ENCODE measurements at regions of chr20 and their contacts with region 1.

Region 1: GRCh38 chr20:13771853-13772453 is 12.8 kb downstream of the ESF1 start:
- DNase-seq: no peak
- H3K4me3 ChIP-seq: no peak overlapping the region
- H3K27ac ChIP-seq: no peak overlapping the region
- H3K4me1 ChIP-seq: no peaks in the 10 kb centered on the region
- H3K27me3 ChIP-seq: no peaks in the 10 kb centered on the region
- CTCF ChIP-seq: peak in 3 of 4 experiments; percentile 27 to 55 (median 36)
- POLR2A ChIP-seq: no peak

Region 2: DNA sequence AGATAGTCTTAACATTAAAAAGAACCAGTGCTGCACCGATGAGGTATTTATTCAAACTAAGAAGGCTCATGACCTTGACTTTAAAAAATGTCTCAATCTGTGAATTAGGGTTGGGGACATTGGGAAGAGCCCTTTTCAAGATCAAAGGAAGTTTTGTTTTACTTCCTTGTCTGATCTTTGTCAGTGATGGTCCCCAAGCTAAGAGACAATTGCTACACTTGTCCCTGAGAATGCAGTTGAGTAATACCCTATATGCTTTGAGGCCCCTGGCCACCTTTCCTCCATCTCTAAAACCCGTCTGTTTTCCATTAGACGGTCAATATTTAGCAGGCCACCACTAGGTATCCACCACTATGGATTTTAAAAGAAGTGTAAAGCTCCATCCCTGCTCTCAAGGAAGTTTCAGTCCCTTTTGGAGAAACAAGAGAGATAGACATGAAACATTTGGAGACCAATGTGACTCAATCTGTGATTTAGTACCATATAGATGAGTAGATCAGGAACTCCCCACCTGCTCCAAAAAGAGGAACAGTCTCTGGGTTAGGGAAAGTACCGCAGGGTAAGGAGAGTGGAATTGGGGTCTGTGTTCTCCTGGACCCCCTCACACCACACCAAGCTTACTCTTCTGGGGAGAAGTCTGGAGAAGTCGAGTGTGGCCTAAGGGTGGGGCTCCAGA is 650.0 kb before region 1 on chr20:
- intact Hi-C with region 1: loop called (anchors 5 kb)
- DNase-seq: no peak
- H3K4me3 ChIP-seq: no peak overlapping the region
- H3K27ac ChIP-seq: no peak overlapping the region
- H3K4me1 ChIP-seq: no peaks in the 10 kb centered on the region
- H3K27me3 ChIP-seq: no peaks in the 10 kb centered on the region
- CTCF ChIP-seq: no peak
- POLR2A ChIP-seq: no peak

Region 3: GRCh38 chr20:13325033-13325432 is 446.9 kb before region 1 on chr20:
- intact Hi-C with region 1: loop called (anchors 5 kb)
- DNase-seq: no peak
- H3K4me3 ChIP-seq: no peak overlapping the region
- H3K27ac ChIP-seq: no peak overlapping the region
- H3K4me1 ChIP-seq: no peaks in the 10 kb centered on the region
- H3K27me3 ChIP-seq: no peaks in the 10 kb centered on the region
- CTCF ChIP-seq: peak in 1 of 4 experiments; percentile 25
- POLR2A ChIP-seq: no peak

Region 4: DNA sequence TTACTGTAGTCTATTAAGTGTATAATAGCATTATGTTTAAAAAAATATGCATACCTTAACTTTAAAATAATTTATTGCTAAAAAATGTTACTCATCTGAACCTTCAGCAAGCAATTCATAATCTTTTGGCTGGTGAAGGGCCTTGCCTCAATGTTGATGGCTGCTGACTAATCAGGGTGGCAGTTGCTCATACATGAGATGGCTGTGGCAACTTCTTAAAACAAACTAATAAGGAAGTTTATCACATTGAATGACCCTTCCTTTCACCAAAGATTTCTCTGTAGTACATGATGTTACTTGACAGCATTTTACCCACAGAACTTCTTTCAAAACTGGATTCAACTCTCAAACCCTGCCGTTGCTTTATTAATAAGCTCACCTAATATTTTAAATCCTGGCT is 217.2 kb before region 1 on chr20:
- intact Hi-C with region 1: loop called (anchors 10 kb)
- DNase-seq: no peak
- H3K4me3 ChIP-seq: no peak overlapping the region
- H3K27ac ChIP-seq: no peak overlapping the region
- H3K4me1 ChIP-seq: no peaks in the 10 kb centered on the region
- H3K27me3 ChIP-seq: no peaks in the 10 kb centered on the region
- CTCF ChIP-seq: no peak
- POLR2A ChIP-seq: no peak